ENCODE measurements at regions of chr3 and their contacts with region 1.

Region 1: GRCh38 chr3:155805802-155806618 is at the start of gene C3orf33:
- DNase-seq: peak; percentile 92
- CTCF ChIP-seq: peak; percentile 95

Region 2: GRCh38 chr3:155690921-155691320 is 115.1 kb before region 1 on chr3:
- CTCF ChIA-PET with region 1: no interaction called
- POLR2A ChIA-PET with region 1: no interaction called
- DNase-seq: no peak
- CTCF ChIP-seq: no peak

Region 3: DNA sequence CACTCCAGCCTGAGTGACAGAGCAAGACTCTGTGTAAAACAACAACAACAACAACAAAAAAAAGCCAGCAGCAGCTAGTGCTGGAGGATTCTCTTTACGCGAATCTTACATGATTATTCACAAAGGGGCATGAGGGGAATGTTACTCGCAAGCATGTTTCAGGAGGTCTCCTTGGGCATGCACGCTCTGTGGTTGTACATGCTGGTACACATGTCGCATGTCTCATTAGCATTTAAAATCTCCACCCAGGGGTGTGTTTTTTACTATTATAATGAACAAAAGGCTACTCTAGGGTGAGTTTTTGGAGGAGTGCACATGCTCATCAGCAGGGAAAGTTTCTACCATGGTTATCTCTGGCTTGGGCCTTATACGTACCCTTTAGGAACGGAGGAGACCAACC is 48.4 kb before region 1 on chr3:
- CTCF ChIA-PET with region 1: interaction called, 19 read pairs
- POLR2A ChIA-PET with region 1: no interaction called
- DNase-seq: no peak
- CTCF ChIP-seq: no peak

Region 4: GRCh38 chr3:155778462-155778861 is 27.5 kb before region 1 on chr3:
- CTCF ChIA-PET with region 1: interaction called, 14 read pairs
- POLR2A ChIA-PET with region 1: no interaction called
- DNase-seq: no peak
- CTCF ChIP-seq: no peak

Region 5: DNA sequence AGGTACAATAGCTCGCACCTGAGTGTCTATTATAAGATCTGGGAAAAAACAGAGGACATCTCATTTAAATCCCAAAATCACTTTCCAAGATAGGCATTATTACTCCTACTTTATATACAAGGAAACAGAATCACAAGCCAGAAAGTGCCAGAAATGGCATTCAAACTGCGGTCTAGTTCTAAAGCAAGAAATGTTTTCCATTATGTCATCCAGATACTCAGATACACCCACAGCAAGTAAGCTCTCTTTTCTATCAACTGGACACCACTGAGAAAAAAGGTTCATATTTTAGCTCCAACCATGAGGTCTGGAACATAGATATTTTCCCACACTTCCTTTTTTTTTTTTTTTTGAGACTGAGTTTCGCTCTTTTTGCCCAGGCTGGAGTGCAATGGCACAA is 40.1 kb after region 1 on chr3:
- CTCF ChIA-PET with region 1: interaction called, 19 read pairs
- POLR2A ChIA-PET with region 1: no interaction called
- DNase-seq: peak; percentile 31
- CTCF ChIP-seq: no peak

Region 6: DNA sequence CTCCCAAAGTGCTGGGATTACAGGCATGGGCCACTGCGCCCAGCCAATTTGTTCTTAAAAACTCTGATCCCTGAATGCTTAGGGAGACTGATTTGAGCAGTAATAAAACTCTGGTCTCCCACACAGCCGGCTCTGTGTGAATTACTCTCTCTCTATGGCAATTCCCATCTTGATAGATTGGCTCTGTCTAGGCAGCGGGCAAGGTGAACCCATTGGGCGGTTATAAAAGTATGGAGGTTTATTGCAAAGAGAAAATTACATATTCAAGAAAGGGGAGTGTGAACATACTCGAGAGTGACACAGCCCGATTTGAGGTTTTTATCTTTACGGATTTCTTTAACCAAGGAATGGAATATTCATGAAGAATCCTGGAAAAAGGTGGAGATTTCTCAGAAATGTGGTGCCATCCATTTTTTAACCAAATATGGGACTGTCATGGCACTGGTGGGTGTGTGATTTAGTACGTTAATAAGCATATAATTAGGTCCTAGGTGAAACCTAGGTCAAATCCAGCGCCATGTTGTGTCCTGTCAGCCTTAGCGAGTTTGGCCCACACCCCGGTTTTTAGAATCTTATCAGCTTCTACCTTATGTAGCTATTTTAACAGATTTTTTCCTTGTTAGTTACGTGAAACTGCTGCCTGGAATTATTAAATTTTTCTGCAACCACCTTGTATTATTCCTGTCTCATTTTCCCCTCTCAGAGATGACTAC is 57.2 kb after region 1 on chr3:
- CTCF ChIA-PET with region 1: interaction called, 14 read pairs
- POLR2A ChIA-PET with region 1: no interaction called
- DNase-seq: no peak
- CTCF ChIP-seq: no peak

Region 7: GRCh38 chr3:155886915-155887314 is 80.9 kb after region 1 on chr3:
- CTCF ChIA-PET with region 1: interaction called, 19 read pairs
- POLR2A ChIA-PET with region 1: no interaction called
- DNase-seq: no peak
- CTCF ChIP-seq: no peak

Region 8: GRCh38 chr3:156024904-156025533 is 219.0 kb after region 1 on chr3:
- CTCF ChIA-PET with region 1: no interaction called
- POLR2A ChIA-PET with region 1: no interaction called
- DNase-seq: no peak
- CTCF ChIP-seq: no peak

Measured in GM10248 (cell line).